ENCODE measurements at regions of chrX and their contacts with region 1.

Region 1: DNA sequence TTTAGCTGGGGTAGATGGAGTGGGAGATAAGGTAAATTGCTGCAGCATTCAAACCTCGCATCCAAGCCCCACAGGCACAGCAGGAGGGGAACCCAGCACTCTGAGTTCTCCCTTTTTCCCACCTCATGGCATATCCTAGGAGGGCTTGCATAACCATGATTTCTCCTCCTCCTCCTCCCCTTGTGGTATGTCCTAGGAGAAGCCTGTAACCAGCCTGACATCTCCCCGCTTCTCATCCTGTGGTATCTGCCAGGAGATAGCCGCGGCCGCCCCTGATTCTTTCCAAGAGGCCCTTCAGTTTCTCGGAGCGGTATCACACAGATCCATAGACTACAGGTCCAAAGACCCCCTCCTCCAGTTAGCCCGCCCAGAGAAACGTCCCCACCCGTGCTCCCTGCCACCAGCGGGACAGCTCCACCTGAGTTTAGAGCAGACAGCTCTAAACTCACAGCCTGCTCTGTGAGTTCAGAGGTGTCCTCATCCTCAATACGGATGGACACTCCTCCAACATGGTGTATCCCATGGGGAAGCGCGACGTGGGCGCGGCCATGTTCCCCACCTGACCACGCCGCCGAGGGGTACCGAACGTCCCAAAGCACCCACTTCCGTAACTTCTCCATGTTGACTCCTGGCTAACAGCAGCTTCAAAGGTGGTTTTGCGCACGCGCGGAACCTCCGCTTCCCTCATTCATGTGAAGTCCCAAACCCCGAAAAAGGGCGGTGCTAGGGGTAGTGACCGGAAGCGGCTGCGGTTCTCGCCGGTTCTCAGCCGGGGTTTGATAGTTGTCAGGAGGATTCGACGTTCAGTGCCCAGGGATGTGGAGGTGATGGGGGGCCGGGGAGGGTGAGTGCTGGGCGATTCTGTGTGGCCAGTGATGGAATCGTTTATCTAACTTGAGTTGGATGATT is at the start of gene ZNF81:
- DNase-seq: peak; percentile 73 to 91 (median 83)
- ATAC-seq: peak; percentile 96
- H3K4me3 ChIP-seq: peak within 1 kb of the TSS; percentile 67
- H3K4me3 Mint-ChIP-seq: peak within 1 kb of the TSS; percentile 96 to 99 (median 98)
- H3K27ac ChIP-seq: peak within 1 kb of the TSS; percentile 79
- H3K27ac Mint-ChIP-seq: peak within 1 kb of the TSS; percentile 94 to 99 (median 97)
- H3K4me1 ChIP-seq: peaks cover 4 to 6% of the 10 kb centered on the region in 2 donors
- H3K4me1 Mint-ChIP-seq: peaks cover 1 to 36% (median 26%) of the 10 kb centered on the region in 7 donors
- H3K27me3 ChIP-seq: no peaks in the 10 kb centered on the region
- H3K27me3 Mint-ChIP-seq: no peaks in the 10 kb centered on the region
- total RNA-seq, gene ZNF81: 11.0 to 14.7 (median 11.7) TPM

Region 2: GRCh38 chrX:46978341-46979291 is 857.8 kb before region 1 on chrX:
- CTCF ChIA-PET with region 1: no interaction called
- POLR2A ChIA-PET with region 1: no interaction called
- intact Hi-C with region 1: no loop called
- DNase-seq: peak; percentile 10 to 63 (median 40)
- ATAC-seq: peak; percentile 77
- H3K4me3 ChIP-seq: no peak overlapping the region
- H3K4me3 Mint-ChIP-seq: no peak overlapping the region
- H3K27ac ChIP-seq: no peak overlapping the region
- H3K27ac Mint-ChIP-seq: no peak overlapping the region
- H3K4me1 ChIP-seq: no peaks in the 10 kb centered on the region
- H3K4me1 Mint-ChIP-seq: no peaks in the 10 kb centered on the region
- H3K27me3 ChIP-seq: no peaks in the 10 kb centered on the region
- H3K27me3 Mint-ChIP-seq: peaks cover 0 to 13% (median 0%) of the 10 kb centered on the region in 5 donors

Region 3: DNA sequence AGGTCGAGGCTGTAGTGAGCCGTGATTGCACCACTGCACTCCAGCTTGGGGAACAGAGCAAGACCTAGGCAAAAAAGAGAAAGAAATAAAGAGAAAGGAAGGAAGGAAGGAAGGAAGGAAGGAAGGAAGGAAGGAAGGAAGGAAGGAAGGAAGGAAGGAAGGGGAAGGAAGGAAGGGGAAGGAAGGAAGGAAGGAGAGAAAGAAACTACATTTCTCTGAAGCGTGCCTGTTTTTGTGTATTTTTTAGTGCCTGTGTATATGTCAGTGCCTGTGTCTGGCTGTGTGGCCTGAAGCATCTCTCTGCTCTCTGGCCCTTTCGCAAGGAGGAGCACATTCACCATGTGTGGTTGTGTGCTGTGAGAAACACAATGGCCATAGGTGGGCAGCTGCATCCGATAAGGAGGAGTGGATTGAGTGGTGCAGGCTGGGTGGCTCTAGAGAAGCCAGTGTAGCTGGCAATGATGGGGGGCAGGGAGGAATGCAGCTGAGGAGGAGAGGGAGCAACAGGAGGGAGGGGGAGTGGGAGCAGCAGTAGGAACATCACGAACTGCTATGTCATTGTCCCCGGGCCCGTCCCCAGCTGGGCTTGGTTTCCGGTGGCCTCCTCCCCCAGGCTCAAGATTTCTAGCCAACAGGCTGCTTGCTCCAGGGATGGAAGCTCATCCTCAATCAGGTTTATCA is 228.1 kb before region 1 on chrX:
- CTCF ChIA-PET with region 1: no interaction called
- POLR2A ChIA-PET with region 1: no interaction called
- intact Hi-C with region 1: no loop called
- DNase-seq: no peak
- ATAC-seq: no peak
- H3K4me3 ChIP-seq: no peak overlapping the region
- H3K4me3 Mint-ChIP-seq: no peak overlapping the region
- H3K27ac ChIP-seq: no peak overlapping the region
- H3K27ac Mint-ChIP-seq: no peak overlapping the region
- H3K4me1 ChIP-seq: no peaks in the 10 kb centered on the region
- H3K4me1 Mint-ChIP-seq: peaks cover 0 to 12% (median 4%) of the 10 kb centered on the region in 7 donors
- H3K27me3 ChIP-seq: no peaks in the 10 kb centered on the region
- H3K27me3 Mint-ChIP-seq: peaks cover 0 to 3% (median 0%) of the 10 kb centered on the region in 5 donors

Region 4: GRCh38 chrX:47854474-47854873 is 18.1 kb after region 1 on chrX:
- CTCF ChIA-PET with region 1: interaction called, 11 read pairs
- POLR2A ChIA-PET with region 1: interaction called, 4 read pairs
- intact Hi-C with region 1: no loop called
- DNase-seq: peak in 7 of 9 donors; percentile 10 to 46 (median 32)
- ATAC-seq: peak; percentile 65
- H3K4me3 ChIP-seq: no peak overlapping the region
- H3K4me3 Mint-ChIP-seq: no peak overlapping the region
- H3K27ac ChIP-seq: no peak overlapping the region
- H3K27ac Mint-ChIP-seq: peak overlapping the region in 2 of 9 donors; percentile 11 to 51
- H3K4me1 ChIP-seq: no peaks in the 10 kb centered on the region
- H3K4me1 Mint-ChIP-seq: peaks cover 0 to 6% (median 4%) of the 10 kb centered on the region in 7 donors
- H3K27me3 ChIP-seq: no peaks in the 10 kb centered on the region
- H3K27me3 Mint-ChIP-seq: no peaks in the 10 kb centered on the region